CD14-positive monocyte (primary cell): ENCODE measurements at regions of chr13 and their contacts with region 1.

Region 1: GRCh38 chr13:31909864-31910551 is 121.6 kb upstream of the FRY start:
- DNase-seq: peak; percentile 62 to 87 (median 80)
- H3K4me3 ChIP-seq: peak overlapping the region in 1 of 3 experiments; percentile 50
- H3K4me3 Mint-ChIP-seq: peak overlapping the region in 1 of 2 donors; percentile 21
- H3K27ac ChIP-seq: peak overlapping the region; percentile 44 to 87
- H3K27ac Mint-ChIP-seq: peak overlapping the region; percentile 81 to 97 (median 95)
- H3K4me1 ChIP-seq: peaks cover 57 to 65% of the 10 kb centered on the region in 2 donors
- H3K4me1 Mint-ChIP-seq: peaks cover 67% of the 10 kb centered on the region
- H3K27me3 ChIP-seq: no peaks in the 10 kb centered on the region
- H3K27me3 Mint-ChIP-seq: peaks cover 0 to 1% (median 0%) of the 10 kb centered on the region in 3 donors
- CTCF ChIP-seq: peak; percentile 97

Region 2: DNA sequence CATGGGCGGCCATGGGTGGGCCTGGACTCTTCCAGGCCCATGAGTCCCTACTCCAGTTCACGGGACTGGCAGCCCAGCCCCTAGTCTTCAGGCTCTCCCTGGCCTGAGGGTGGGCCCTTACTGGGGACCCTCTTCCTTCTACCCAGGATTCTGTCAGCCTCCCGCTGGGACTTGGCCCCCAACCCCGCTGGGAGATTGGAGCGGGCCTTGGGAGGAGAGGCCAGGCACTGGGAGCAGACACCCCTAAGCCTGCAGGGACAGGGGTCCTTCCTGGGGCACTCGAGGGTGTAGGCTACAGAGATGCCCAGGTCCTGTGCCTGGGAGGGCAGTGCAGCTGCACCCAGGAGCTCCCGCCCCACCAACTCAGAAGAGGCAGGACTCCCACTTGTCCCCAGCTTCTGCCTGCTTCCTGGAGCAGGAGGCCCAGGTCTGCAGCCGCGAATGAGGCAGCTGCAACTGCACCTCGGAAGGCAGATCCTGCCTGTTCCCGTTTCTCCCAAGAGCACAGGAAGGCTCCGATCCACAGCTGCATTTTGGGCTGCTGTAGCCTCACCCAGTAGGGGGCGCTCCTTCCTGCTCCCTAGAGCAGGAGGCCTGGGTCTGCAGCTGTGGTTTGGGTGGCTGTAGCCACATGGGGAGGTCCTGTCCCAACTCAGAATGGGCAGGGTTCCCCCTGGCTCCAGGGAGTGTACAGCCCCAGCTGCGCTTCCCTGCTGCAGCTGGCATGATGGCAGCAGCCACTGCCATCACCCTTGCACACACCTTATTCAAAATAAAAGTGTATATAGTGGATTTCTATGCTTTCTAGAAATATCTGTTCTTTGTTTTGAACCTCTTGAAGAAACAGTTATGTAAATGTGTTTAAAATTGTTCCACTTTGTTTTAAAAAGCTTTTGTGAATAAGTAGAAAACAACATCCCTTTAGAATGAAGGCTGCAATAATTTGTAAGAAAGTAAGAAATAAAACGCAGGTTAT is 930.7 kb before region 1 on chr13:
- intact Hi-C with region 1: no loop called
- DNase-seq: peak in 1 of 3 donors; percentile 8
- H3K4me3 ChIP-seq: no peak overlapping the region
- H3K4me3 Mint-ChIP-seq: no peak overlapping the region
- H3K27ac ChIP-seq: no peak overlapping the region
- H3K27ac Mint-ChIP-seq: no peak overlapping the region
- H3K4me1 ChIP-seq: no peaks in the 10 kb centered on the region
- H3K4me1 Mint-ChIP-seq: no peaks in the 10 kb centered on the region
- H3K27me3 ChIP-seq: no peaks in the 10 kb centered on the region
- H3K27me3 Mint-ChIP-seq: peaks cover 9 to 15% (median 11%) of the 10 kb centered on the region in 3 donors
- CTCF ChIP-seq: peak; percentile 67

Region 3: DNA sequence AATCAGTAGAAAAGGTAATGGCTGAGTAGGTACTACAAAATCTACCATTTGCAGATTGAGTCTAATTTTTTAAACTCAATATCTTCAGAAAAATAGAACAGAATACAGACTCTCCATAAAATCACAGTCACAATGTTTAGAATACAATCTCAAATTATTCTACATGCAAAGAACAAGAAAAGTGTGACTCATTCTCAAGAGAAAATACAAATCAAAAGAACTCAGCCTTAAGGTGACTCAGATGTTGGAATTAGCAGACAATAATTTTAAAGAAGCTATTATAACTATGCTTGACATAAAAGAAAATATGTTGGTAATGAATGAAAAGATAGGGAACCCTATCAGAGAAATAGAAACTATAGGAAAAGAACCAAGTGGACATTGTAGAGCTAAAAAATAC is 91.8 kb before region 1 on chr13:
- intact Hi-C with region 1: no loop called
- DNase-seq: no peak
- H3K4me3 ChIP-seq: no peak overlapping the region
- H3K4me3 Mint-ChIP-seq: no peak overlapping the region
- H3K27ac ChIP-seq: no peak overlapping the region
- H3K27ac Mint-ChIP-seq: no peak overlapping the region
- H3K4me1 ChIP-seq: peaks cover 11 to 15% of the 10 kb centered on the region in 2 donors
- H3K4me1 Mint-ChIP-seq: peaks cover 18% of the 10 kb centered on the region
- H3K27me3 ChIP-seq: no peaks in the 10 kb centered on the region
- H3K27me3 Mint-ChIP-seq: peaks cover 0 to 1% (median 0%) of the 10 kb centered on the region in 3 donors
- CTCF ChIP-seq: no peak

Region 4: DNA sequence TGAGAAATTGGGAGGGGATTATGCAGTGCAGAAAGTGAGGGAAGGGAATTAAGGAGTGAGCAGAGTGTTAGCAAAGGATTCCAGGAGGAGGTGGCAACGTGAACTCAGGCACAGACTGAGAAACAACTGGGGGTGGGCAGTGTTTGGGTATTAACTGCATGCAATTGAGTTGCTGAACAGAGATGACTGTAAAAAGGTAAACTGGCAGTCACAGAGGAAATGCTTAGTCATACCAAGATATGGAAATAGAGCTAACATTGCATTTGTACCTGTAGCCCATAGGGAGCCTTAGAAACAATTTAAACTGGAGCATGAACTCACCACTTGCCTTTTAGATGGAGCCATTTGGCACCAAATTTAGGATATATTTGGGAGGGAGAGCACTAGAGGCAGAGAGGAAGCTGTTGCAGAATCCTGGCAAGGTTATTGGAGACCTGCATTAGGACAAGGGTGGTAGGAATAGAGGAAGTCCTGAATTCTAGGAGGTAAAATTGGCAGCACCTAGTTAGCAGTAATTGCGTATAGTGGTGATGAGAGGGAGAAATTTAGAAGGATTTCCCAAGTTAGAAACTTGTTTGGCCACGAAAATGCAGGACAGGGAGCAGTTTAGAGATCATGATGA is 21.0 kb after region 1 on chr13:
- intact Hi-C with region 1: no loop called
- DNase-seq: no peak
- H3K4me3 ChIP-seq: no peak overlapping the region
- H3K4me3 Mint-ChIP-seq: no peak overlapping the region
- H3K27ac ChIP-seq: no peak overlapping the region
- H3K27ac Mint-ChIP-seq: no peak overlapping the region
- H3K4me1 ChIP-seq: peaks cover 30 to 37% of the 10 kb centered on the region in 2 donors
- H3K4me1 Mint-ChIP-seq: peaks cover 19% of the 10 kb centered on the region
- H3K27me3 ChIP-seq: no peaks in the 10 kb centered on the region
- H3K27me3 Mint-ChIP-seq: peaks cover 0 to 2% (median 1%) of the 10 kb centered on the region in 3 donors
- CTCF ChIP-seq: no peak

Region 5: GRCh38 chr13:31951215-31951678 is 41.2 kb after region 1 on chr13:
- intact Hi-C with region 1: loop called in 1 of 2 experiments (anchors 2 kb)
- DNase-seq: peak; percentile 99 to 100 (median 100)
- H3K4me3 ChIP-seq: no peak overlapping the region
- H3K4me3 Mint-ChIP-seq: peak overlapping the region; percentile 10 to 26
- H3K27ac ChIP-seq: peak overlapping the region; percentile 83 to 95
- H3K27ac Mint-ChIP-seq: peak overlapping the region; percentile 96 to 99 (median 99)
- H3K4me1 ChIP-seq: peaks cover 41 to 56% of the 10 kb centered on the region in 2 donors
- H3K4me1 Mint-ChIP-seq: peaks cover 53% of the 10 kb centered on the region
- H3K27me3 ChIP-seq: no peaks in the 10 kb centered on the region
- H3K27me3 Mint-ChIP-seq: peaks cover 0 to 3% (median 0%) of the 10 kb centered on the region in 3 donors
- CTCF ChIP-seq: no peak

Region 6: DNA sequence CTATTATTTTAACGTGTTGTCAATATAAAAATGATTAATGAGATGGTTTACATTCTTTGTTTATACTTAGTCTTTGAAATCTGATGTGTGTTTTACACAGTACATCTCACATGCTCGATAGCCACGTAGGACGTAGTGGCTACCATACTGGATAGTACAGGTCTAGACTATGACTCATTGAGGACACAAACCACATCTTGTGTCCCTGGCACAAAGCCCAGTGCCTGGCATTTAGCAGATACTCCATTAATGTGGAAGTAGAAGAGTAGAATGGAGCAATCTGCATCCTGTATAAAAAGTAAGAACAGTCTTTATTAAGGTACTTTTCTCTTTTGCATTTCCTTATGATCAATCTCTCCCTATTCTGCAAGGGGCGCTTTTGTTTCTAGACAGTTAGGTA is 72.5 kb after region 1 on chr13:
- intact Hi-C with region 1: loop called in 1 of 2 experiments (anchors 10 kb)
- DNase-seq: peak; percentile 92 to 100 (median 98)
- H3K4me3 ChIP-seq: peak overlapping the region in 1 of 3 experiments; percentile 5
- H3K4me3 Mint-ChIP-seq: no peak overlapping the region
- H3K27ac ChIP-seq: peak overlapping the region in 1 of 2 donors; percentile 37
- H3K27ac Mint-ChIP-seq: peak overlapping the region in 5 of 7 donors; percentile 32 to 79 (median 64)
- H3K4me1 ChIP-seq: peaks cover 12 to 13% of the 10 kb centered on the region in 2 donors
- H3K4me1 Mint-ChIP-seq: peaks cover 30% of the 10 kb centered on the region
- H3K27me3 ChIP-seq: no peaks in the 10 kb centered on the region
- H3K27me3 Mint-ChIP-seq: peaks cover 0 to 2% (median 0%) of the 10 kb centered on the region in 3 donors
- CTCF ChIP-seq: no peak

Region 7: GRCh38 chr13:32001185-32001768 is 91.3 kb after region 1 on chr13:
- intact Hi-C with region 1: loop called in 1 of 2 experiments (anchors 5 kb)
- DNase-seq: peak; percentile 70 to 78 (median 77)
- H3K4me3 ChIP-seq: peak overlapping the region; percentile 14 to 63 (median 22)
- H3K4me3 Mint-ChIP-seq: peak overlapping the region; percentile 71 to 81
- H3K27ac ChIP-seq: peak overlapping the region; percentile 84 to 89
- H3K27ac Mint-ChIP-seq: peak overlapping the region; percentile 93 to 100 (median 99)
- H3K4me1 ChIP-seq: peaks cover 13 to 17% of the 10 kb centered on the region in 2 donors
- H3K4me1 Mint-ChIP-seq: peaks cover 34% of the 10 kb centered on the region
- H3K27me3 ChIP-seq: no peaks in the 10 kb centered on the region
- H3K27me3 Mint-ChIP-seq: peaks cover 0 to 2% (median 0%) of the 10 kb centered on the region in 3 donors
- CTCF ChIP-seq: peak; percentile 92

Region 8: DNA sequence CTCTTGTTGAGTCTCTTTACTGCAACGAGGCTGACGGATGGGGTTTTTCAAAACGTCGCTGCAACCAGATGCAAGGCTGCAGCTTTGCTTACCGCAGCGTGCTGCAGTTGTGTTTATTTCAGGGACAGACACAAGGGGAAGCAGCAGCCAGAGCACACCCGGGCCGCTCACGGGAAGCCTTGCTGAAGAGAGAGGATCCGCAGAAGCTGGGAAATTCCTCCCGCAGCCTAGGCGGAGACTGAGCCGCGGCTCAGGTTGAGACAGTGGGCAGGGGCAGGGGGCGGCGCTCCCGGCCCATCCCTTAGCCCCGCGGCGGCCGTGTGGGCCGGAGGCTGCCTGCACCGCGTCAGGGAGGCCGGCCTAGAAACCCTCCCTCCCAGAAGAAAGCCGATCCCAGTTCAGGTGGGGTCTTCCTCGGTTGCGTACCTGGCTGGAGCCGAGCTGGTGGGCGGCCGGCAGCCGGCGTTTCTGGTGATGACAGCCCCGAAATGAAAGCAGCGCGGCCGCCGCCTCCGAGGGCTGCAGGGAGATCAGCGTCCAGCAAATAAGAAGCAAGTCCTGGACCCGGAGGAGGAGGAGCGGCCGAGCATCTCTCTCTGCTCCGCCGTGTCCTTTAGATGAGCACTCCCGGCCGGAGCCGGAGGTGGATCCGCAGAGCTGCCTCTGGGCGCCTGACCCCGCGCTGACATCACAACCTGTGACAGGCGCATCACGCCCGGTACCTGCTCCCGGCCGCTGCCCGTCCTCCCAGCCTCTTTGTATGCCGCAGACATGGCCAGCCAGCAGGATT is 121.2 kb after region 1 on chr13 and contains the start of gene FRY:
- intact Hi-C with region 1: loop called in 1 of 2 experiments (anchors 5 kb)
- DNase-seq: peak; percentile 58 to 86 (median 71)
- H3K4me3 ChIP-seq: peak within 1 kb of the TSS; percentile 71 to 92 (median 91)
- H3K4me3 Mint-ChIP-seq: peak within 1 kb of the TSS; percentile 95 to 96
- H3K27ac ChIP-seq: peak within 1 kb of the TSS; percentile 91 to 93
- H3K27ac Mint-ChIP-seq: peak within 1 kb of the TSS; percentile 92 to 97 (median 95)
- H3K4me1 ChIP-seq: peaks cover 50 to 60% of the 10 kb centered on the region in 2 donors
- H3K4me1 Mint-ChIP-seq: peaks cover 62% of the 10 kb centered on the region
- H3K27me3 ChIP-seq: no peaks in the 10 kb centered on the region
- H3K27me3 Mint-ChIP-seq: no peaks in the 10 kb centered on the region
- CTCF ChIP-seq: peak; percentile 20
- polyA plus RNA-seq, gene FRY: 3.9 to 31.8 (median 5.0) TPM